CD8-positive, alpha-beta T cell (primary cell): ENCODE measurements at regions of chr17 and their contacts with region 1.

Region 1: GRCh38 chr17:74659898-74660297 is 36.4 kb upstream of the CD300E start:
- DNase-seq: no peak
- ATAC-seq: no peak
- H3K4me3 ChIP-seq: no peak overlapping the region
- H3K4me3 Mint-ChIP-seq: no peak overlapping the region
- H3K27ac ChIP-seq: no peak overlapping the region
- H3K27ac Mint-ChIP-seq: no peak overlapping the region
- H3K4me1 ChIP-seq: no peaks in the 10 kb centered on the region
- H3K4me1 Mint-ChIP-seq: peaks cover 6% of the 10 kb centered on the region
- H3K27me3 ChIP-seq: peaks cover 0 to 8% of the 10 kb centered on the region in 2 experiments
- H3K27me3 Mint-ChIP-seq: peaks cover 39% of the 10 kb centered on the region
- CTCF ChIP-seq: no peak

Region 2: GRCh38 chr17:74671031-74671771 is 11.3 kb after region 1 on chr17:
- CTCF ChIA-PET with region 1: interaction called, 48 read pairs
- POLR2A ChIA-PET with region 1: interaction called, 4 read pairs
- intact Hi-C with region 1: no loop called
- DNase-seq: peak; percentile 51 to 84 (median 75)
- ATAC-seq: peak; percentile 97
- H3K4me3 ChIP-seq: no peak overlapping the region
- H3K4me3 Mint-ChIP-seq: no peak overlapping the region
- H3K27ac ChIP-seq: no peak overlapping the region
- H3K27ac Mint-ChIP-seq: no peak overlapping the region
- H3K4me1 ChIP-seq: no peaks in the 10 kb centered on the region
- H3K4me1 Mint-ChIP-seq: no peaks in the 10 kb centered on the region
- H3K27me3 ChIP-seq: peaks cover 2 to 15% of the 10 kb centered on the region in 2 experiments
- H3K27me3 Mint-ChIP-seq: peaks cover 51% of the 10 kb centered on the region
- CTCF ChIP-seq: no peak

Region 3: DNA sequence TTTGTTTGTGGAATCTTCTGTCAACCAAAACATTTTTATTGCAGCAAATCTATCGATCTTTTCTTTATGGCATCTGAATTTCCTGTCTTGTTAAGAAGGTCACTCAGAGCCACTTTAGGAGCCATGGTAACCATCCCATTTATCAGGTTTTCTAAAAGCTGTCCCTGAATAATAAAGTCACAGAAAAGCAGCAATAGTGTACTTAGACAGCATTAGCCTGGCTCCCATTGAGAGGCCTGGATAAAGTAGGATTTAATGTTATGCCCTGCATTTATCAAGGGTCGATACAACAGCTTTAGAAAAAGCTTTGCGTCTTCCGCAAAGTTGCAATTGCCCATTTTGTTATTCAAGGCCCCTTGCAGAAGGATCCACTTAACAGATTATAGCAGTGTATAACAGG is 62.9 kb after region 1 on chr17:
- CTCF ChIA-PET with region 1: interaction called, 13 read pairs
- POLR2A ChIA-PET with region 1: no interaction called
- intact Hi-C with region 1: no loop called
- DNase-seq: no peak
- ATAC-seq: no peak
- H3K4me3 ChIP-seq: no peak overlapping the region
- H3K4me3 Mint-ChIP-seq: no peak overlapping the region
- H3K27ac ChIP-seq: no peak overlapping the region
- H3K27ac Mint-ChIP-seq: no peak overlapping the region
- H3K4me1 ChIP-seq: no peaks in the 10 kb centered on the region
- H3K4me1 Mint-ChIP-seq: no peaks in the 10 kb centered on the region
- H3K27me3 ChIP-seq: no peaks in the 10 kb centered on the region
- H3K27me3 Mint-ChIP-seq: no peaks in the 10 kb centered on the region
- CTCF ChIP-seq: no peak

Region 4: GRCh38 chr17:74759243-74759801 is 99.4 kb after region 1 on chr17:
- CTCF ChIA-PET with region 1: interaction called, 67 read pairs
- POLR2A ChIA-PET with region 1: interaction called, 5 read pairs
- intact Hi-C with region 1: no loop called
- DNase-seq: peak in 7 of 9 experiments; percentile 47 to 85 (median 71)
- ATAC-seq: peak; percentile 83
- H3K4me3 ChIP-seq: peak overlapping the region; percentile 37 to 41
- H3K4me3 Mint-ChIP-seq: peak overlapping the region; percentile 81
- H3K27ac ChIP-seq: peak overlapping the region; percentile 38 to 62
- H3K27ac Mint-ChIP-seq: peak overlapping the region; percentile 90
- H3K4me1 ChIP-seq: peaks cover 84% of the 10 kb centered on the region
- H3K4me1 Mint-ChIP-seq: peaks cover 75% of the 10 kb centered on the region
- H3K27me3 ChIP-seq: no peaks in the 10 kb centered on the region
- H3K27me3 Mint-ChIP-seq: no peaks in the 10 kb centered on the region
- CTCF ChIP-seq: no peak

Region 5: DNA sequence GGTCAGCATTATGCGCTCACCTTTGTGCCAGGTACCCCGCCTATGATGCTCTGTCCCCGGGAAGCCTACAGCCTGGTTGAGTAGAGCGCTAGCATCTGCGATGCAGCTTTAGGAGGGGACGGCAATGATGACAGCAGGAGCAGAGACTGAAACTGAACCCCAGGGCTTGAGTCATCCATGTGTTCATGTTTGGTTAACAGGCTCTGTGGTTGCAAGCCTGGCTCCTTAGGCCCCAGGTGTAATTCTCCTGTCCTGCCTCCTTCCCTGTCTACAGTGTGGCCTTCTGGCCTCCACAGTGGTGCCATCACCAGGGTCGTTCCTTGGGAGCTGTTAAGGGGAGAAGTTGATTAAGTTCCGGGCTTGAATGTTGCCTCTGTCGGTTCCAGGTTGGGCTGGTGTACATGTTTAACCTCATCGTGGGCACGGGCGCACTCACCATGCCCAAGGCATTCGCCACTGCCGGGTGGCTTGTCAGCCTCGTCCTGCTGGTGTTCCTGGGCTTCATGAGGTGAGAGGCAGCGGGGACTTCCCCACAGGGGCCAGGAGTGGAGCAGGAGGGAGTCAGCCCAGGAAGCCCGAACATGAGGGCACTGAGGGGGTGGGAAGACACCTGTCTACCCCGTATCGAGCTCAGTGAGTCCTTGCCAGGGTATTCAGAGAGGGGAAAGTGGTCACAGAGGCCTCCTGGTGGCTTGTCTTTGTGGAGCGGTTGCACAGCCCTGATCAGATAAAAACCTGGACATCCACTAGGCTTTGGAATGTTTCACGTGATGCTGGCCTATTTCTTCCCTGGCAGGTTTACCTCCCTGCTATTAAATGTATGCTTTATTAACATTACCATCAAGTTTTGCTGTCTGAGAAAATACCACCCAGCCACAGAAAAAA is 125.4 kb after region 1 on chr17:
- CTCF ChIA-PET with region 1: interaction called, 196 read pairs
- POLR2A ChIA-PET with region 1: interaction called, 3 read pairs
- intact Hi-C with region 1: no loop called
- DNase-seq: no peak
- ATAC-seq: peak; percentile 17
- H3K4me3 ChIP-seq: no peak overlapping the region
- H3K4me3 Mint-ChIP-seq: no peak overlapping the region
- H3K27ac ChIP-seq: no peak overlapping the region
- H3K27ac Mint-ChIP-seq: peak overlapping the region; percentile 71
- H3K4me1 ChIP-seq: peaks cover 47% of the 10 kb centered on the region
- H3K4me1 Mint-ChIP-seq: peaks cover 66% of the 10 kb centered on the region
- H3K27me3 ChIP-seq: no peaks in the 10 kb centered on the region
- H3K27me3 Mint-ChIP-seq: no peaks in the 10 kb centered on the region
- CTCF ChIP-seq: no peak

Region 6: GRCh38 chr17:74814453-74814852 is 154.6 kb after region 1 on chr17:
- CTCF ChIA-PET with region 1: interaction called, 7 read pairs
- POLR2A ChIA-PET with region 1: no interaction called
- intact Hi-C with region 1: loop called in 1 of 2 experiments (anchors 1 kb)
- DNase-seq: peak in 2 of 9 experiments; percentile 13 to 25
- ATAC-seq: no peak
- H3K4me3 ChIP-seq: no peak overlapping the region
- H3K4me3 Mint-ChIP-seq: no peak overlapping the region
- H3K27ac ChIP-seq: no peak overlapping the region
- H3K27ac Mint-ChIP-seq: no peak overlapping the region
- H3K4me1 ChIP-seq: no peaks in the 10 kb centered on the region
- H3K4me1 Mint-ChIP-seq: no peaks in the 10 kb centered on the region
- H3K27me3 ChIP-seq: no peaks in the 10 kb centered on the region
- H3K27me3 Mint-ChIP-seq: no peaks in the 10 kb centered on the region
- CTCF ChIP-seq: no peak

Region 7: DNA sequence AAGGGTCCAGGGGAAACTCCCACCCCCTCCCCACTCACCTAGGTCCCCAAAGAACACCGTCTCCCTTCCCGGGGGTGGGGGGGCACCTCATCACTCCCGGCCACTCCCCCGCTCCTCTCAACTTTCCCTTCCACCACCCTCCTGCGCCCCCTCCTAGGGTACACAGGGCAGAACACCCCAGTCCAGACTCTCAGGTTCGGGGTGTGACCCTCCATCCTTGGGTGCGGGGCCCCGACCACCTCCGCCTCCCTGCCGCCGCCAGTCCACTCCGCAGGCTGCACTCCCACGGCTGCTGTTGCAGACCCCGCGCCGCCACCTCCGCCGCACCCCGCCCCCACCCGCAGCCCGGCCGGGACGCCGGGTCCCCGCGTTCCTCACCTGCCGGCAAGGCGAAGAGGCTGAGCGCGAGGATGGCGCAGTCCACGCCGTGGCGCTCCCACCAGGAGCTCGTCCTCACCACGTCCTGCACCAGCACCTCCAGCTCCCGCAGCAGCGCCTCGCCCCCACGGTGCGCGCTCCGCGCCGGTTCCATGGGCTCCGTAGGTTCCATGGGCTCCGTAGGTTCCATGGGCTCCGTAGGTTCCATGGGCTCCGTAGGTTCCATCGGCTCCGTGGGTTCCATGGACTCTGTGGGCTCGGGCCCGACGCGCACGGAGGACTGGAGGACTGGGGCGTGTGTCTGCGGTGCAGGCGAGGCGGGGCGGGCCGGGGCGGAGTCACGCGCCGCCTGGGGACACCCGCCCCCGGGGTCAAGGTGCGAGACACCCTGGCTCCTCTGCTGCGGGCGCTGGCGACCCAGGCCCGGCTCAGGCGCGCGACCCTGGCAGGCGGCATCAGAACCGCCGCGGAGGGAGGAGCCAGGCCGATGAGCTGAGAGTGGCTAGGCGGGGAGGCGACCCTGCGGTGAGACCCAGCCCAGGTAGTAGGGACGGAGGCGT is 233.3 kb after region 1 on chr17 and contains the start of gene FADS6:
- CTCF ChIA-PET with region 1: no interaction called
- POLR2A ChIA-PET with region 1: no interaction called
- intact Hi-C with region 1: no loop called
- DNase-seq: no peak
- ATAC-seq: peak; percentile 51
- H3K4me3 ChIP-seq: peak within 1 kb of the TSS in 1 of 2 experiments; percentile 35
- H3K4me3 Mint-ChIP-seq: peak within 1 kb of the TSS; percentile 80
- H3K27ac ChIP-seq: no peak within 1 kb of the TSS
- H3K27ac Mint-ChIP-seq: no peak within 1 kb of the TSS
- H3K4me1 ChIP-seq: peaks cover 13% of the 10 kb centered on the region
- H3K4me1 Mint-ChIP-seq: peaks cover 8% of the 10 kb centered on the region
- H3K27me3 ChIP-seq: peaks cover 12 to 17% of the 10 kb centered on the region in 2 experiments
- H3K27me3 Mint-ChIP-seq: peaks cover 37% of the 10 kb centered on the region
- CTCF ChIP-seq: no peak
- total RNA-seq, gene FADS6: not detected

Region 8: DNA sequence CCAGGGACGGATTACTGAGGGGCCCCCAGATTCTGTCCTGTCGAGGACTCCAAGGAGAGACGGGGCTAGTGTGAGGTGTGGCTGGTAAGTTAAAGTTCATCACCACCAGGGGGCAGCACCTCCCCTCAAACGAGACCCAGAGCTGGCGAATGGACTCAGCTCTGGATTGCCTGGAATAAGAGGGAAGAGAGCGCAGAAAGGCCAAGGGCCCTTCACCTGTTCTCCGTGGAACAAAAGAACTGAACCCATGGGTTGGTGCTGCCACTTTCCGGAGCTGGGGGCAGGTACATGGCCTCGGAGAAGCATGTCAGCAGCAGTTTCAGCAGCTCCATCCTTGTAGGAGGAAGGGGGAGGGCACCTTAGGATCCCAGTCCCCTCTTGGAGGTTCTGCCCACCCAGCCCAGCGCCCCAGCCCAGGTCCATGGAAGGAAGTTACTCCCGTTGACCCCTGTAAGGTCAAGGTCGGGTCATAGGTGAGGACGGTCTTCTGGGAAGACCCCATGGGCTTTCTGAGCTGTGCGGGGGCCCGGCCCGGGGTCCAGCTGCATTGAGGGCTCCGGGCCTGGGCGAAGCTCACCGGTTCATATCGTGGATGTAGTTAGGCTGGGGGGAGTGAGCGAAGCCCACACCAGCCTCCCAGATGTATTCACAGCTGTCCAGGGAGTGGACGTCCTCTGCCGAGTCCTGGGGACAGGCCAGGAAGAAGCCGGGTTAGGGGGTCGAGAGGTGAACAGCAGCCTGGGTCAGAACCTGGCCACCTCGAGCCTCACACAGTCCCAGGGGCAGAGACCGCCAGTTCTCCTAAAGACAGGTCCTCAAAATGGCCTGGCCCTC is 302.0 kb after region 1 on chr17:
- CTCF ChIA-PET with region 1: interaction called, 7 read pairs
- POLR2A ChIA-PET with region 1: no interaction called
- intact Hi-C with region 1: loop called in 1 of 2 experiments (anchors 5 kb)
- DNase-seq: peak; percentile 62 to 93 (median 85)
- ATAC-seq: peak; percentile 75
- H3K4me3 ChIP-seq: no peak overlapping the region
- H3K4me3 Mint-ChIP-seq: no peak overlapping the region
- H3K27ac ChIP-seq: no peak overlapping the region
- H3K27ac Mint-ChIP-seq: no peak overlapping the region
- H3K4me1 ChIP-seq: no peaks in the 10 kb centered on the region
- H3K4me1 Mint-ChIP-seq: peaks cover 9% of the 10 kb centered on the region
- H3K27me3 ChIP-seq: no peaks in the 10 kb centered on the region
- H3K27me3 Mint-ChIP-seq: no peaks in the 10 kb centered on the region
- CTCF ChIP-seq: peak; percentile 86